CD4-positive, alpha-beta memory T cell (primary cell): ENCODE measurements at regions of chr1 and their contacts with region 1.

Region 1: DNA sequence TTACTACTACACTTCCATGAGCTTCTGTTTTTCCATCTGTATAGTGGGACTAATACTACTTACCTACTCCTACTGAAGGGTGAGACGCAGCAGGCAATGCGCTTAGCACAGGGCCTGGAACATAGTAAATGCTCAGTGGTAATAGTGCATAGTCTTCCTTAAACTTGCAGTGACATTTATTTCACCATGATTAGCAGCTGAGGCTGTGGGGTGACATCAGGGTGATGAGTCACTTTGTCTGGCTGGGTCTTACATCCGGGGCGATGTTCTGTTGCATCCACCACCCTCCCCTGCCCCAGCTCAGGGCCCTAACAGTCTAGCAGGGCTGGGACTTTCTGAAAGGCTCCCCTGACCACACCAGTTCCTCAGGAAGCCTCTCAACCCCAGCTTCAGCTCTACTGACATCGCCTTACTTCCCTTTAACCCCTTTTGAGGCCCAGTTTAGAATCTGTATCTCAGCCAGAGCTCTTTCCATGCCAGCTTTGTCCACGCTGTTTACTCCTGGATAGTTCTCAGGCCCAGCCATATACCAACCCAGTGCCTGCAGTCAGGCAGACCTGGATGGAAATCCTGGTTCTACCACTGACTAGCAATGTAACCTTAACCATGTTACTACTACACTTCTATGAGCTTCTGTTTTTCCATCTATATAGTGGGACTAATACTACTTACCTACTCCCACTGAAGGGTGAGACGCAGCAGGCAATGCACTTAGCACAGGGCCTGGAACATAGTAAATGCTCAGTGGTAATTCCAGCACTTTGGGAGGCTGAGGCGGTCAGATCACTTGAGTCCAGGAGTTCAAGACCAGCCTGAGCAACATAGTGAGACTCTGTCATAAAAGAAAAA is 66.3 kb downstream of the CD58 start:
- DNase-seq: peak; percentile 85 to 98 (median 89)
- H3K4me3 ChIP-seq: no peak overlapping the region
- H3K4me3 Mint-ChIP-seq: peak overlapping the region in 7 of 8 donors; percentile 17 to 75 (median 67)
- H3K27ac ChIP-seq: peak overlapping the region; percentile 86
- H3K27ac Mint-ChIP-seq: peak overlapping the region; percentile 91 to 98 (median 94)
- H3K4me1 ChIP-seq: peaks cover 78% of the 10 kb centered on the region
- H3K4me1 Mint-ChIP-seq: peaks cover 48 to 86% (median 63%) of the 10 kb centered on the region in 4 donors
- H3K27me3 ChIP-seq: no peaks in the 10 kb centered on the region
- H3K27me3 Mint-ChIP-seq: no peaks in the 10 kb centered on the region

Region 2: DNA sequence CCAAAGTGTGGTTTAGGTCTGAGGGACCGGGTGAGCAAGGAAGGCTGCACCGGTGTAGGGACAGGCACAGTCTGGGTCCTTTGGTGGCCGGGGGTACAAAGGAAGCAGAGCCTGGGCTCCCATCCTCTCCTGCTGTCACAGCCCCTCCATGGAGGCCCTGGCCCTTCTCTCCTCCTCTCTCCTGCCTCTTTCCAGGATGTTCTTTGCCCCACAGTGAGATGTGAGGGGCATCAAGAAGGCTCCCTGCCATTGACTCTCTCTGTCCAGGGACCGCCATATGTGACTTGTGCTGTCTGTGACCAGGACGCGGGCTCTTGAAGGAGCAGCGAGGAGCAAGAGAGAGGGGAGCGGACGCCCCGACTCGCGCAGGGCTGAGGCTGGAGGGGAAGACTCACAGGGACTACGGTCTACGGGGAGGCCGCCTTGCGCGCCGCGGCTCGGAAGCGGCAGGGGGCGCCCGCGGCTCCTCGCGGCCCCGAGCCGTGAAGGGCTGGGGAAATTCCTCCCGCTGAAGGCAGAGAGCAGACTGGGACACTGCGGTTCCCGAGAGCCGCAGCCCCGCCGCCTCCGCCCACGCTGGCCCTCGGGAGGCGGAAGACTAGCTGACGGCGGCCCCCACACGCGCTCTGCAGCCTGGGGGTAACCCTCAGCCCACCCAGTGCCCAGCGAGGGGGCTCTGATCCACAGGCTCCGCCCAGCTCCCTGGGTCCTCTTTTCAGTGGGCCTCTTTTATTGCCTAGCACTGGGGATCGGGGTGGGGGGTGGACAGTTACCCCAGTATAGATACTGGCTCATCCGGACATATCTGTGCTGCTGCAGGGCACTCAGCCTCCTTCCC is 352.6 kb before region 1 on chr1:
- CTCF ChIA-PET with region 1: interaction called, 16 read pairs
- POLR2A ChIA-PET with region 1: no interaction called
- intact Hi-C with region 1: loop called (anchors 1 kb)
- DNase-seq: peak; percentile 72 to 81 (median 76)
- H3K4me3 ChIP-seq: peak overlapping the region; percentile 23 to 28
- H3K4me3 Mint-ChIP-seq: peak overlapping the region; percentile 46 to 87 (median 80)
- H3K27ac ChIP-seq: peak overlapping the region; percentile 17
- H3K27ac Mint-ChIP-seq: peak overlapping the region; percentile 81 to 93 (median 88)
- H3K4me1 ChIP-seq: peaks cover 17% of the 10 kb centered on the region
- H3K4me1 Mint-ChIP-seq: peaks cover 10 to 23% (median 15%) of the 10 kb centered on the region in 4 donors
- H3K27me3 ChIP-seq: no peaks in the 10 kb centered on the region
- H3K27me3 Mint-ChIP-seq: peaks cover 0 to 3% of the 10 kb centered on the region in 2 donors

Region 3: GRCh38 chr1:116418091-116418830 is 86.3 kb before region 1 on chr1:
- CTCF ChIA-PET with region 1: interaction called, 6 read pairs
- POLR2A ChIA-PET with region 1: interaction called, 12 read pairs
- intact Hi-C with region 1: no loop called
- DNase-seq: peak; percentile 86 to 90 (median 87)
- H3K4me3 ChIP-seq: peak overlapping the region; percentile 90 to 96
- H3K4me3 Mint-ChIP-seq: peak overlapping the region; percentile 84 to 96 (median 91)
- H3K27ac ChIP-seq: peak overlapping the region; percentile 80
- H3K27ac Mint-ChIP-seq: peak overlapping the region; percentile 95 to 98 (median 96)
- H3K4me1 ChIP-seq: peaks cover 32% of the 10 kb centered on the region
- H3K4me1 Mint-ChIP-seq: peaks cover 14 to 52% (median 27%) of the 10 kb centered on the region in 4 donors
- H3K27me3 ChIP-seq: no peaks in the 10 kb centered on the region
- H3K27me3 Mint-ChIP-seq: no peaks in the 10 kb centered on the region

Region 4: GRCh38 chr1:116514708-116515525 is 10.4 kb after region 1 on chr1:
- CTCF ChIA-PET with region 1: interaction called, 35 read pairs
- POLR2A ChIA-PET with region 1: interaction called, 117 read pairs
- intact Hi-C with region 1: loop called (anchors 1 kb)
- DNase-seq: peak; percentile 70 to 90 (median 75)
- H3K4me3 ChIP-seq: peak overlapping the region; percentile 6 to 21
- H3K4me3 Mint-ChIP-seq: peak overlapping the region; percentile 65 to 88 (median 78)
- H3K27ac ChIP-seq: peak overlapping the region; percentile 74
- H3K27ac Mint-ChIP-seq: peak overlapping the region; percentile 94 to 99 (median 96)
- H3K4me1 ChIP-seq: peaks cover 67% of the 10 kb centered on the region
- H3K4me1 Mint-ChIP-seq: peaks cover 53 to 78% (median 62%) of the 10 kb centered on the region in 4 donors
- H3K27me3 ChIP-seq: no peaks in the 10 kb centered on the region
- H3K27me3 Mint-ChIP-seq: no peaks in the 10 kb centered on the region

Region 5: DNA sequence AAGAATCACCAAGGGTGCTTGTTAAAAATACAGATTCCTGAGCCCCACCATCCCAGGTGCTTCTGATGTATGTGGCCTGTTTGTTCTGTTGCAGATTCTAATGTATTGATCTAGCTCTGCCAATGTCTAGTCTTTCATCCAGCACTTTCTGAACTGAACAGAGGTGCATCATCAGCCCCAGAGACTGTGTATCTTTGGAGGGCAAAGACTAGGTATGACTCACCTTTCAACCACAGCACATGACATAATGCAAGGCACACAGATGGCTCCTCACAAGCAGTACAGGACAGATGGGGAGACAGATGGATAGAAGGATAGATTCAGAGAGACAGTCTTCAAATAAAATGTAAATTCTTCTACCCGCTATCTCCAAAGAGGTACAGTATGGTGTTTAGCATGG is 34.0 kb after region 1 on chr1:
- CTCF ChIA-PET with region 1: interaction called, 5 read pairs
- POLR2A ChIA-PET with region 1: interaction called, 3 read pairs
- intact Hi-C with region 1: loop called (anchors 5 kb)
- DNase-seq: peak in 1 of 5 donors; percentile 67
- H3K4me3 ChIP-seq: no peak overlapping the region
- H3K4me3 Mint-ChIP-seq: no peak overlapping the region
- H3K27ac ChIP-seq: no peak overlapping the region
- H3K27ac Mint-ChIP-seq: peak overlapping the region in 6 of 7 donors; percentile 13 to 82 (median 55)
- H3K4me1 ChIP-seq: peaks cover 34% of the 10 kb centered on the region
- H3K4me1 Mint-ChIP-seq: peaks cover 25 to 52% (median 37%) of the 10 kb centered on the region in 4 donors
- H3K27me3 ChIP-seq: no peaks in the 10 kb centered on the region
- H3K27me3 Mint-ChIP-seq: no peaks in the 10 kb centered on the region

Region 6: GRCh38 chr1:116556289-116557006 is 51.9 kb after region 1 on chr1:
- CTCF ChIA-PET with region 1: interaction called, 6 read pairs
- POLR2A ChIA-PET with region 1: interaction called, 22 read pairs
- intact Hi-C with region 1: loop called (anchors 1 kb)
- DNase-seq: peak; percentile 68 to 92 (median 72)
- H3K4me3 ChIP-seq: no peak overlapping the region
- H3K4me3 Mint-ChIP-seq: peak overlapping the region; percentile 14 to 74 (median 48)
- H3K27ac ChIP-seq: peak overlapping the region; percentile 53
- H3K27ac Mint-ChIP-seq: peak overlapping the region; percentile 79 to 99 (median 88)
- H3K4me1 ChIP-seq: peaks cover 77% of the 10 kb centered on the region
- H3K4me1 Mint-ChIP-seq: peaks cover 60 to 87% (median 75%) of the 10 kb centered on the region in 4 donors
- H3K27me3 ChIP-seq: no peaks in the 10 kb centered on the region
- H3K27me3 Mint-ChIP-seq: no peaks in the 10 kb centered on the region